Activated CD4-positive, alpha-beta T cell treated with anti-CD3 and anti-CD28 coated beads, Interleukin-2, amount 10 ng/mL, durations not matched to agents 7 days and 5 days (primary cell): ENCODE measurements at regions of chr13 and their contacts with region 1.

Region 1: DNA sequence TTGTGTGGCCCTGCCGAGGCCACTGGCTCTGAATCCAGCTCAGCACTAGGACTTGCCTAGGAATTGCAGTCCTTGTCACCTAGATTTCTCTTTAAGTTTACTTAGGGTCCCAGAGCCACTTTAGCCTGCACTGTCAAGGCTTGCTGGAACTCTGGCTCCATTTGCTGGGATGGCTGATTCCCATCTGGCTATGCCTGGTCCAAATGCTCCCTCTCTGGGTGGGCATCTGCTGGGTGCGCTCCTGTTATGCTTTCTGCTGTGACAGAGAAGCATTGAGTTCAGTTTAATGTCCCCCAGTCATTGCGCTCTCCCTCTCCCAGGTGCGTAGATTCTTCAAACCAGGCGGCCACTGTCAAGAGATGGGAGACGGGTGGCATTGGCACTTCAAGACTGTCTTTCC is 102.2 kb downstream of the MTUS2 start:
- DNase-seq: no peak
- H3K4me3 Mint-ChIP-seq: no peak overlapping the region
- H3K27ac Mint-ChIP-seq: no peak overlapping the region
- H3K4me1 Mint-ChIP-seq: no peaks in the 10 kb centered on the region
- H3K27me3 Mint-ChIP-seq: no peaks in the 10 kb centered on the region

Region 2: GRCh38 chr13:28885181-28885580 is 37.2 kb before region 1 on chr13:
- CTCF ChIA-PET with region 1: no interaction called
- POLR2A ChIA-PET with region 1: interaction called, 12 read pairs
- DNase-seq: no peak
- H3K4me3 Mint-ChIP-seq: no peak overlapping the region
- H3K27ac Mint-ChIP-seq: no peak overlapping the region
- H3K4me1 Mint-ChIP-seq: no peaks in the 10 kb centered on the region
- H3K27me3 Mint-ChIP-seq: no peaks in the 10 kb centered on the region

Region 3: DNA sequence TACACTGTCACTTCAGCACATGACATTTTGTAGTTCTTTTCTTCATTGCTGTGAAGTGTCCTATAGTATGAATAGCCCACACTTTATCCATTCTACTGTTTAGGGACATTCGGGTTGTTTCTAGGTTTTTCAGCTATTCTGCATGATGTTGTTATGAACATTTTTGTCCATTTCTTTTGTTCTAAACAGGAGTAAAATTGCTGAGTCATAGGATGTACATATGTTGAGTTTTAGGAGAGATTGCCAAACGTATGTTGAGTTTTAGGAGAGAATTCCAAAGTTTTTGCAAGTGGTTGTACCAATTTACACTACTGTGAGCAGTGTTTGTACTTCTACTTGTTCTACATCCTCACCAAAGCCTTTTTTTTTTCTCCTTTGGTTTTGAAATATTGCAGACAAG is 12.8 kb after region 1 on chr13:
- CTCF ChIA-PET with region 1: no interaction called
- POLR2A ChIA-PET with region 1: no interaction called
- DNase-seq: no peak
- H3K4me3 Mint-ChIP-seq: no peak overlapping the region
- H3K27ac Mint-ChIP-seq: no peak overlapping the region
- H3K4me1 Mint-ChIP-seq: no peaks in the 10 kb centered on the region
- H3K27me3 Mint-ChIP-seq: no peaks in the 10 kb centered on the region